ENCODE measurements at regions of chr3 and their contacts with region 1.

Region 1: GRCh38 chr3:196568246-196569002 is at the starts of genes FBXO45 and WDR53:
- DNase-seq: peak; percentile 97
- H3K4me3 Mint-ChIP-seq: peak within 1 kb of the TSS; percentile 97
- H3K27ac Mint-ChIP-seq: peak within 1 kb of the TSS; percentile 90
- H3K4me1 Mint-ChIP-seq: peaks cover 46% of the 10 kb centered on the region
- H3K27me3 Mint-ChIP-seq: no peaks in the 10 kb centered on the region
- total RNA-seq, gene FBXO45: 16.3 to 17.2 TPM
- total RNA-seq, gene WDR53: 20.9 to 24.1 TPM

Region 2: DNA sequence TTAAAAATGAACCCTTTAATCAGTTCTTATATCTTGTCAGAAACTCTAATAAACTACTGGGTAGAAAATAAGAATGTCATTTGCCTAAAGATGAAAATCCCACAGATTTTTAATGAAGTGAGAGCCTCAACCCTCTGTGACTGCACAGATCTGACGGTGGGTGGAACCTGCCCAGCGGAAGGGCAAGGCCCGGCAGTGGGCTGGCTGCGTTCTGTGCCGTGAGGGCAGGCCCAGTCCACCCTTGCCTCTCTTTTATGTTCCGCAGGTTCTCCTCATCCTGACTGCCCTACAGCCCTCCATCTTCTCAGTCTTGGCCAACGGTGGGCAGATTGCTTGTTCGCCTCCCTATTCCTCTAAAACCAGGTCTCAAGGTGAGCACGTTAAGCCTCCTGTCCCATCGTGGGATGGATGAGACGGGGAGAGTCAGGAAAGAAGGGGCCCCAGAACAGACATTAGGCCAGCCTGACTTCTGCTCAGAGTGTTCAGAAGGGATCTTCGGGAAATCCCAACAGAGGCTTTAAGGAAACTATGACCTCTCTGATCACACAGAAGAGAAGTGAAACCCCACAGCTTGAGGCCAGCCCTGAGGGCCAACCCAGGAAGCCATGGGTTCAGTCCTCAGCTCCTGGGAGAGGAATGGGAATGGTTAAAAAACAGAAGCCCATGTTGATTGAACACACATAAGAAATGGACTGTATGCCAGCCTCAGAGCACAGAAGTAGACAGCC is 336.1 kb before region 1 on chr3:
- CTCF ChIA-PET with region 1: no interaction called
- POLR2A ChIA-PET with region 1: no interaction called
- intact Hi-C with region 1: no loop called
- DNase-seq: no peak
- H3K4me3 Mint-ChIP-seq: no peak overlapping the region
- H3K27ac Mint-ChIP-seq: no peak overlapping the region
- H3K4me1 Mint-ChIP-seq: peaks cover 11% of the 10 kb centered on the region
- H3K27me3 Mint-ChIP-seq: no peaks in the 10 kb centered on the region

Region 3: GRCh38 chr3:196388956-196389355 is 179.5 kb before region 1 on chr3:
- CTCF ChIA-PET with region 1: no interaction called
- POLR2A ChIA-PET with region 1: no interaction called
- intact Hi-C with region 1: no loop called
- DNase-seq: no peak
- H3K4me3 Mint-ChIP-seq: no peak overlapping the region
- H3K27ac Mint-ChIP-seq: no peak overlapping the region
- H3K4me1 Mint-ChIP-seq: peaks cover under 1% of the 10 kb centered on the region
- H3K27me3 Mint-ChIP-seq: no peaks in the 10 kb centered on the region

Region 4: GRCh38 chr3:196432137-196432879 is 136.1 kb before region 1 on chr3 and contains the start of gene UBXN7:
- CTCF ChIA-PET with region 1: no interaction called
- POLR2A ChIA-PET with region 1: no interaction called
- intact Hi-C with region 1: loop called (anchors 5 kb)
- DNase-seq: peak; percentile 98
- H3K4me3 Mint-ChIP-seq: peak within 1 kb of the TSS; percentile 75
- H3K27ac Mint-ChIP-seq: peak within 1 kb of the TSS; percentile 90
- H3K4me1 Mint-ChIP-seq: peaks cover 13% of the 10 kb centered on the region
- H3K27me3 Mint-ChIP-seq: no peaks in the 10 kb centered on the region
- total RNA-seq, gene UBXN7: 58.1 to 61.1 TPM

Region 5: GRCh38 chr3:196528639-196529233 is 39.7 kb before region 1 on chr3:
- CTCF ChIA-PET with region 1: interaction called, 25 read pairs
- POLR2A ChIA-PET with region 1: no interaction called
- intact Hi-C with region 1: loop called (anchors 5 kb)
- DNase-seq: peak; percentile 92
- H3K4me3 Mint-ChIP-seq: peak overlapping the region; percentile 71
- H3K27ac Mint-ChIP-seq: peak overlapping the region; percentile 87
- H3K4me1 Mint-ChIP-seq: peaks cover 13% of the 10 kb centered on the region
- H3K27me3 Mint-ChIP-seq: peaks cover 2% of the 10 kb centered on the region

Region 6: GRCh38 chr3:196585044-196585757 is 16.8 kb after region 1 on chr3:
- CTCF ChIA-PET with region 1: no interaction called
- POLR2A ChIA-PET with region 1: no interaction called
- intact Hi-C with region 1: no loop called
- DNase-seq: no peak
- H3K4me3 Mint-ChIP-seq: no peak overlapping the region
- H3K27ac Mint-ChIP-seq: no peak overlapping the region
- H3K4me1 Mint-ChIP-seq: peaks cover 4% of the 10 kb centered on the region
- H3K27me3 Mint-ChIP-seq: no peaks in the 10 kb centered on the region

Region 7: DNA sequence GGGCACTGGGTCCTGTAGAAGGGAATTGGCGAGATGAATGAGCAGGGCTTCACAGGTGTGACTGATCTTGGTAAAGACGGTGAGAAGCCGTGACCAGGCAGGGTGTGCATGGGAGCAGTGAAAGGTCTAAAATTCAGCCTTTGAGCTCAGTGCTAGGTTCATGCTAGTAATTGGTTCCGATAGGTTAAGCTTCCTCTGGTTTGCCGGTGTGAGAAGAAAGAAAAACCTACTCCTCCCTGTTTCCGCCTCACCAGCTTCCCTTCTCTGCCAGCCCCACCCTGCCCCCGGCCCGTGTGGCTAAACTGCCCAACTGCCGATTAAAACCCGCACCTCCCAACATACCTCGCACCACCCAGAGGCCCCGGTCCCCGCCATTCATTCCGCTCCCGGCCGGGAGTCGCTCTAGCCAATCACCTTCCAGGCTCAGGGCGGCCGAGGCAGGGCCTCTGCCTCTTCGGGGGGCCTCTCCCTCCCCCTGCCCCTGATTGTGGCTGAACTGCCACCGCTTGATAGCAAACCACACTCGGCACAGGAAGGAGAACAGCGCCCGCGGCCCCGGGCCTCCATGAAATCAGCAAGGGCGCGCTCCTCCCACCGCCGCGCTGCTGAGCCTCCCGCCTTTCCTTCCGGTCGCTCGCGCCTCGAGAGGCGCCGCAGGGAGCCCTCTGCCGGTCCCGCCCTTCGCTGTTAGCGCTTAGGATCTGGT is 63.8 kb after region 1 on chr3:
- CTCF ChIA-PET with region 1: interaction called, 3 read pairs
- POLR2A ChIA-PET with region 1: no interaction called
- intact Hi-C with region 1: loop called (anchors 5 kb)
- DNase-seq: peak; percentile 92
- H3K4me3 Mint-ChIP-seq: peak overlapping the region; percentile 80
- H3K27ac Mint-ChIP-seq: peak overlapping the region; percentile 94
- H3K4me1 Mint-ChIP-seq: peaks cover 53% of the 10 kb centered on the region
- H3K27me3 Mint-ChIP-seq: no peaks in the 10 kb centered on the region

Region 8: GRCh38 chr3:196684548-196685407 is 116.4 kb after region 1 on chr3:
- CTCF ChIA-PET with region 1: interaction called, 12 read pairs
- POLR2A ChIA-PET with region 1: no interaction called
- intact Hi-C with region 1: no loop called
- DNase-seq: peak; percentile 80
- H3K4me3 Mint-ChIP-seq: peak overlapping the region; percentile 48
- H3K27ac Mint-ChIP-seq: peak overlapping the region; percentile 31
- H3K4me1 Mint-ChIP-seq: peaks cover 13% of the 10 kb centered on the region
- H3K27me3 Mint-ChIP-seq: no peaks in the 10 kb centered on the region

Measured in activated CD4-positive, alpha-beta memory T cell treated with anti-CD3 and anti-CD28 coated beads for 36 hours (primary cell).